MCF 10A (cell line): ENCODE measurements at regions of chr1 and their contacts with region 1.

Region 1: GRCh38 chr1:215566556-215567490 is at the start of gene KCTD3:
- DNase-seq: peak; percentile 90
- H3K4me3 Mint-ChIP-seq: peak within 1 kb of the TSS; percentile 98
- H3K27ac Mint-ChIP-seq: peak within 1 kb of the TSS; percentile 99
- H3K4me1 Mint-ChIP-seq: peaks cover 28% of the 10 kb centered on the region
- H3K27me3 Mint-ChIP-seq: no peaks in the 10 kb centered on the region
- CTCF ChIP-seq: no peak
- total RNA-seq, gene KCTD3: 78.9 and 90.3 TPM in 2 replicates

Region 2: DNA sequence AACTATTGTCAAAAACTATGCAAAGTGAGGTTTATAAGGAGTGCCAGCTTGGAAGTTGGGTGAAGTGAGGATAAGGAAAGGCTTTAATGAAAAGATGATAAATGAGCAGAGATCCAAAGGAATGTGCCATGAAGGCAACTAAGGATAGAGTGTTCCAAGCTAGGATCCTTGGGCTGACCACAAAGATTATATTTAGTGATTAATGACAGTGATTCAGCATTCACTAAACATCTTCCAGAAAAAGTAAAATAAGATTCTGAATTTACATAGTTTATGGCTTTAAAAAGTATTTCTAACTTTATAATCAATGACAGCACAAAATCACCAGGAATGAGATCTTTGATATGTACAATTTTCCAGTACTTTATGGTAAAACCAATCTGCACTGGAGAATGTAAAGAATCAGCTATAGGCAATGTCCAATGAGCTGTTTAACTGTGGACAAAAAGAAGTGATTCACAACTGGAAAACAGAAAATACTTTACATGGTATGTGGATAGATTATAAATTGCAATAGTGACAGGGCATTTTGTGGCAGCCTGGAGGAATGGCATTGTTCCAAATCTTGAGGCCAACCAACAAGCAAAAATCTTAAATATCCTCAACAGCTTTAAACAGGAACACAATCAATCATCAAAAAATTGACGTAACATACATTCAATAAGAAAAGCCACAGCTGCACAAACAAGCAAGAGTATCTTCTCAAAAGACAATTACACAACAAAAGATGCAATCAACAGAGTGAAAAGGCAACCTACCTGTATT is 90.8 kb before region 1 on chr1:
- CTCF ChIA-PET with region 1: no interaction called
- POLR2A ChIA-PET with region 1: interaction called, 11 read pairs
- intact Hi-C with region 1: no loop called
- DNase-seq: peak; percentile 81
- H3K4me3 Mint-ChIP-seq: peak overlapping the region; percentile 10
- H3K27ac Mint-ChIP-seq: peak overlapping the region; percentile 88
- H3K4me1 Mint-ChIP-seq: peaks cover 39% of the 10 kb centered on the region
- H3K27me3 Mint-ChIP-seq: no peaks in the 10 kb centered on the region
- CTCF ChIP-seq: no peak

Region 3: DNA sequence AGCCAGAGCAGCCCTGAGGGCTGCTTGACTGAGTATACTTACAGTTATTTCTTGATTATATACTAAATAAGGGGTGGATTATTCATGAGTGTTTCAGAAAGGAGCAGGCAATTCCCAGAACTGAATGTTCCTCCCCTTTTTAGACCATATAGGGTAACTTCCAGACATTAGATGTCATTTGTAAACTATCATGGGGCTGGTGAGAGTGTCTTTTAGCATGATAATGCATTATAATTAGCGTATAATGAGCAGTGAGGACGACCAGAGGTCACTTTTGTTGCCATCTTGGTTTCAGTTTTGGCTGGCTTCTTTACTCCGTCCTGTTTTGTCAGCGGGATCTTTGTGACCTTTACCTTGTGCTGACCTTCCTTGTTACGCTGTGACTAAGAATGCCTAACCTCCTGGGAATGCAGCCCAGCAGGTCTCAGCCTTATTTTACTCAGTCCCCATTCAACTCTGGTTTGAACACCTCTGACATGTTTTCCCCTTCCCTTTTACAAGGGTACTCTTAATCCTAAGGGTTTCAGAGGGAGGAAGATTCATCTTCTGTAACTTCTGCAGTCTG is 16.4 kb after region 1 on chr1:
- CTCF ChIA-PET with region 1: interaction called, 3 read pairs
- POLR2A ChIA-PET with region 1: interaction called, 25 read pairs
- intact Hi-C with region 1: loop called (anchors 2 kb)
- DNase-seq: peak; percentile 69
- H3K4me3 Mint-ChIP-seq: peak overlapping the region; percentile 60
- H3K27ac Mint-ChIP-seq: peak overlapping the region; percentile 89
- H3K4me1 Mint-ChIP-seq: peaks cover 16% of the 10 kb centered on the region
- H3K27me3 Mint-ChIP-seq: no peaks in the 10 kb centered on the region
- CTCF ChIP-seq: no peak

Region 4: GRCh38 chr1:215606564-215607168 is 39.8 kb after region 1 on chr1:
- CTCF ChIA-PET with region 1: interaction called, 16 read pairs
- POLR2A ChIA-PET with region 1: interaction called, 49 read pairs
- intact Hi-C with region 1: loop called (anchors 1 kb)
- DNase-seq: peak; percentile 50
- H3K4me3 Mint-ChIP-seq: no peak overlapping the region
- H3K27ac Mint-ChIP-seq: peak overlapping the region; percentile 32
- H3K4me1 Mint-ChIP-seq: peaks cover 21% of the 10 kb centered on the region
- H3K27me3 Mint-ChIP-seq: no peaks in the 10 kb centered on the region
- CTCF ChIP-seq: peak; percentile 68